T-cell (primary cell): ENCODE measurements at regions of chr12 and their contacts with region 1.

Region 1: DNA sequence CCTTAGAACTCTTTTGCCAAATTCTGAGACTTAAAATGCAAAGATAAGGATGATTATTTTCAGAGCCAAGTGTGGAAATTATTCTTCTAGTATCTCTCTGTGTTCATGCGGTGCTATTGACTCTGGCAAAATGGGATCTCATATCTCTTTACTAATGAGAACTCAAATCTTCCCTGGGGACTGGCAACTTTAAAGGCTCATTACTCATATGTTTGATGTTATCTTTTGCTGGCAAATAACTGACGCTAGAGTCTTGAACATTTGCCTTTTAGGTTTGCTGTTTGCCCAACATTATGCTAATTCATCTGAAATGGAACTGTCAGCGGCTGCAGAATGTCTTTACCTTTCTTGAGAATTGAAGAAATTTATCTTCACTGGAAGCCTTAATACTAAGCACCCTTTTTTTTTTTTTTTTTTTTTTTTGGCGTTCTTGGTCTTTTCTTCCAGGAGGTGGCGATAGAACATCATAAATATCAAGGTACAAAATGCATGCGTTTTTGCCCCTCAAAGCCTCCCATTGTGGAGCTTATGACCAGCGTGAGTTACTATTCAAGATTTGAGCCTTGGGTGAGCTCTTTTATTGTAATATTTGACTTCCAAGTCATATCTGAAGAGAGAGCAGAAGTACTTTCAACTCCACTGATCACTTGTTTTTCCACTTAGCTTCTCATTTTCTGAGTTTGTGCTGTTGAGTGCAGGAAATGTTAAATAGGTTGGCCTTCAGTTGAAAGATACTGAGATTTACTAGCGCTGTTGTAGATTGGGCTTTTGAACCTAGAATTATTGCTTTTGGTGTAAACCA is 86.6 kb downstream of the CAND1 start:
- DNase-seq: peak in 14 of 35 experiments; percentile 0 to 77 (median 8)
- ATAC-seq: peak; percentile 55 to 73 (median 64)
- H3K4me3 ChIP-seq: no peak overlapping the region
- H3K4me3 Mint-ChIP-seq: no peak overlapping the region
- H3K27ac ChIP-seq: no peak overlapping the region
- H3K27ac Mint-ChIP-seq: no peak overlapping the region
- H3K4me1 ChIP-seq: peaks cover 0 to 12% of the 10 kb centered on the region in 2 experiments
- H3K4me1 Mint-ChIP-seq: peaks cover 14 to 24% (median 21%) of the 10 kb centered on the region in 3 donors
- H3K27me3 ChIP-seq: no peaks in the 10 kb centered on the region
- H3K27me3 Mint-ChIP-seq: no peaks in the 10 kb centered on the region

Region 2: DNA sequence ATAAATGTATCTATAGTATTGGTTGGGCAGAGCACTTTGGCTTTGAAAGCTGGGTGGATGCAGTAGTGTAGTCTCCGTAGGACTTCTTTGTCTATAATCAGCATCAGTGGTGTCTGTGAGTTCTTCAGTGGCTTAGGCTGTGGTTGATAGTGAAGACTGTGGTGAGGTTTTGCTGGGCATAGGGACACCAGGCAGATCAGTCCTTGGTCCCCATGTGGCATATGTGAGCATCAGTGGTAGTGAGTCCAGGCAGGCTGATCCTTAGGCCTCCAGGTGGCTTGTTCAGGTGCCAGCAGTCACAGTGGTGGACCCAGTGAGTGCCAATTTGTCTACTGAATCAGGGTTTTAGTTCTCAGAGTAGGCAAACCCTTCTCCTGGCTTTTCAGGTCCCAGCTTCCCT is 16.2 kb before region 1 on chr12:
- CTCF ChIA-PET with region 1: no interaction called
- POLR2A ChIA-PET with region 1: no interaction called
- DNase-seq: no peak
- ATAC-seq: no peak
- H3K4me3 ChIP-seq: no peak overlapping the region
- H3K4me3 Mint-ChIP-seq: no peak overlapping the region
- H3K27ac ChIP-seq: no peak overlapping the region
- H3K27ac Mint-ChIP-seq: no peak overlapping the region
- H3K4me1 ChIP-seq: no peaks in the 10 kb centered on the region
- H3K4me1 Mint-ChIP-seq: no peaks in the 10 kb centered on the region
- H3K27me3 ChIP-seq: peaks cover 0 to 2% of the 10 kb centered on the region in 2 experiments
- H3K27me3 Mint-ChIP-seq: no peaks in the 10 kb centered on the region

Region 3: GRCh38 chr12:67428431-67428830 is 72.7 kb after region 1 on chr12:
- CTCF ChIA-PET with region 1: interaction called, 4 to 13 read pairs
- POLR2A ChIA-PET with region 1: no interaction called
- DNase-seq: no peak
- ATAC-seq: no peak
- H3K4me3 ChIP-seq: no peak overlapping the region
- H3K4me3 Mint-ChIP-seq: no peak overlapping the region
- H3K27ac ChIP-seq: no peak overlapping the region
- H3K27ac Mint-ChIP-seq: no peak overlapping the region
- H3K4me1 ChIP-seq: no peaks in the 10 kb centered on the region
- H3K4me1 Mint-ChIP-seq: peaks cover 0 to 11% (median 10%) of the 10 kb centered on the region in 3 donors
- H3K27me3 ChIP-seq: peaks cover 0 to 4% of the 10 kb centered on the region in 2 experiments
- H3K27me3 Mint-ChIP-seq: peaks cover 4 to 10% of the 10 kb centered on the region in 2 donors

Region 4: DNA sequence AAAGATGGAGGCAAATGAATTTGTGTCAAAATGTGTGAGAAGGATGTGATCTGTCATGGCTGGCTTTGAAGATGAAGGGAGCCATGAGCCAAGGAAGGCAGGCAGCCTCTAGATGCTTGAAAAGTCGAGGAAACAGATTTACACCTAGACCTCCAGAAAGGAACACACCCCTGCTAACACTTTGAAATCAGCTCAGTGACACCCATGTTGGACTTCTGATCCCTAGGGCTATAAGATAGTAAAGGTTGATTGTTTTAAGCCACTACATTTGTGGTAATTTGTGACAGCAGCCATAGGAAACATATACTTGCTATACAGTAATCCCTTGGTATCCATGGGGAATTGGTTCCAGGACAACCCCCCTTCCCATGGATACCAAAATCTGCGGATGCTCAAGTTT is 212.3 kb after region 1 on chr12:
- CTCF ChIA-PET with region 1: interaction called in 1 of 2 experiments, 10 read pairs
- POLR2A ChIA-PET with region 1: no interaction called
- DNase-seq: no peak
- ATAC-seq: no peak
- H3K4me3 ChIP-seq: no peak overlapping the region
- H3K4me3 Mint-ChIP-seq: no peak overlapping the region
- H3K27ac ChIP-seq: no peak overlapping the region
- H3K27ac Mint-ChIP-seq: no peak overlapping the region
- H3K4me1 ChIP-seq: no peaks in the 10 kb centered on the region
- H3K4me1 Mint-ChIP-seq: peaks cover 3 to 10% (median 9%) of the 10 kb centered on the region in 3 donors
- H3K27me3 ChIP-seq: no peaks in the 10 kb centered on the region
- H3K27me3 Mint-ChIP-seq: peaks cover 0 to 7% of the 10 kb centered on the region in 2 donors

Region 5: GRCh38 chr12:67885375-67886169 is 529.8 kb after region 1 on chr12:
- CTCF ChIA-PET with region 1: interaction called in 1 of 2 experiments, 10 read pairs
- POLR2A ChIA-PET with region 1: no interaction called
- DNase-seq: no peak
- ATAC-seq: no peak
- H3K4me3 ChIP-seq: no peak overlapping the region
- H3K4me3 Mint-ChIP-seq: no peak overlapping the region
- H3K27ac ChIP-seq: no peak overlapping the region
- H3K27ac Mint-ChIP-seq: no peak overlapping the region
- H3K4me1 ChIP-seq: no peaks in the 10 kb centered on the region
- H3K4me1 Mint-ChIP-seq: peaks cover 1 to 11% (median 1%) of the 10 kb centered on the region in 3 donors
- H3K27me3 ChIP-seq: no peaks in the 10 kb centered on the region
- H3K27me3 Mint-ChIP-seq: peaks cover 3% of the 10 kb centered on the region in 2 donors

Region 6: GRCh38 chr12:67981287-67982162 is 625.7 kb after region 1 on chr12:
- CTCF ChIA-PET with region 1: interaction called, 7 to 12 read pairs
- POLR2A ChIA-PET with region 1: no interaction called
- DNase-seq: no peak
- ATAC-seq: no peak
- H3K4me3 ChIP-seq: no peak overlapping the region
- H3K4me3 Mint-ChIP-seq: no peak overlapping the region
- H3K27ac ChIP-seq: no peak overlapping the region
- H3K27ac Mint-ChIP-seq: no peak overlapping the region
- H3K4me1 ChIP-seq: no peaks in the 10 kb centered on the region
- H3K4me1 Mint-ChIP-seq: no peaks in the 10 kb centered on the region
- H3K27me3 ChIP-seq: peaks cover 0 to 5% of the 10 kb centered on the region in 2 experiments
- H3K27me3 Mint-ChIP-seq: peaks cover 5% of the 10 kb centered on the region in 2 donors

Region 7: DNA sequence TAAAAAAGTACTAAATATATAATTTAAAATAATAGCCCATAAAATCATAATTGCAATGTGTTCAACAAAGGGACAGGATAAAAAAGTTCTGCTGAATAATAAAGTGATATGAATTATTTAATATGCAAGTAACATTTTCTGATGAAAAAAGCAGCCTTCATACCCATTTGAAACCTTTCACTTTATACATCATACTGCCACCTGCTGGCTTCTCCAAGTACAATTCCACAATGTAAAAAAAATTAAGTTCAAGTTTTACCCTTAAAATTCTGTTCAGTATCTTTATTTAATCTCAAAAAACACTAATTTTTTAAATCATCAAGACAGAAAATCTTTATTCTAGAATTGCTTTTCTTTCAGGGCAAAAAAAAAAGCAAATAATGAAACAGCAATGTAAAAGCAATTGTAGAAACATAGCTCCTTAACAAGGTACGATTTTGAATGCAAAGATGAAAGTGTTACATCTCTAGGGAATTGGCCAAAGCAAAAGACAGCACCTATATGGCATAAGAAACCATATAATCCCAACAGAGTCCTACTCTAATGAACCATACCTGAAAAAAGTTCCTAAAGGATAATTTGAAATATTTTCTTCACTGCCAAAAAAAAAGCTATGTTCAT is 961.4 kb after region 1 on chr12:
- CTCF ChIA-PET with region 1: interaction called, 4 to 23 read pairs
- POLR2A ChIA-PET with region 1: no interaction called
- DNase-seq: peak in 24 of 35 experiments; percentile 4 to 78 (median 34)
- ATAC-seq: no peak
- H3K4me3 ChIP-seq: no peak overlapping the region
- H3K4me3 Mint-ChIP-seq: no peak overlapping the region
- H3K27ac ChIP-seq: no peak overlapping the region
- H3K27ac Mint-ChIP-seq: no peak overlapping the region
- H3K4me1 ChIP-seq: no peaks in the 10 kb centered on the region
- H3K4me1 Mint-ChIP-seq: no peaks in the 10 kb centered on the region
- H3K27me3 ChIP-seq: no peaks in the 10 kb centered on the region
- H3K27me3 Mint-ChIP-seq: no peaks in the 10 kb centered on the region